Caco-2 (cell line): ENCODE measurements at regions of chr14 and their contacts with region 1.

Region 1: GRCh38 chr14:93788543-93789227 is 400 bp upstream of the PRIMA1 start:
- DNase-seq: peak; percentile 44 to 52
- H3K4me3 ChIP-seq: peak overlapping the region; percentile 46
- H3K4me3 Mint-ChIP-seq: peak overlapping the region; percentile 71
- H3K27ac Mint-ChIP-seq: no peak overlapping the region
- H3K4me1 ChIP-seq: 0 out of 2 replicates have a peak, but pooled peaks cover 4% of the 10 kb centered on the region
- H3K4me1 Mint-ChIP-seq: no peaks in the 10 kb centered on the region
- H3K27me3 ChIP-seq: no peaks in the 10 kb centered on the region
- H3K27me3 Mint-ChIP-seq: peaks cover 4% of the 10 kb centered on the region
- CTCF ChIP-seq: peak in 1 of 2 experiments; percentile 8

Region 2: GRCh38 chr14:93686278-93686677 is 102.4 kb before region 1 on chr14:
- CTCF ChIA-PET with region 1: no interaction called
- POLR2A ChIA-PET with region 1: no interaction called
- intact Hi-C with region 1: loop called (anchors 1 kb)
- DNase-seq: no peak
- H3K4me3 ChIP-seq: no peak overlapping the region
- H3K4me3 Mint-ChIP-seq: no peak overlapping the region
- H3K27ac Mint-ChIP-seq: no peak overlapping the region
- H3K4me1 ChIP-seq: no peaks in the 10 kb centered on the region
- H3K4me1 Mint-ChIP-seq: peaks cover 9% of the 10 kb centered on the region
- H3K27me3 ChIP-seq: no peaks in the 10 kb centered on the region
- H3K27me3 Mint-ChIP-seq: peaks cover 14% of the 10 kb centered on the region
- CTCF ChIP-seq: no peak

Region 3: GRCh38 chr14:93702946-93703345 is 85.7 kb before region 1 on chr14:
- CTCF ChIA-PET with region 1: no interaction called
- POLR2A ChIA-PET with region 1: no interaction called
- intact Hi-C with region 1: no loop called
- DNase-seq: no peak
- H3K4me3 ChIP-seq: no peak overlapping the region
- H3K4me3 Mint-ChIP-seq: no peak overlapping the region
- H3K27ac Mint-ChIP-seq: no peak overlapping the region
- H3K4me1 ChIP-seq: no peaks in the 10 kb centered on the region
- H3K4me1 Mint-ChIP-seq: no peaks in the 10 kb centered on the region
- H3K27me3 ChIP-seq: no peaks in the 10 kb centered on the region; the same call in 1 of the 2 replicates
- H3K27me3 Mint-ChIP-seq: peaks cover 7% of the 10 kb centered on the region
- CTCF ChIP-seq: no peak